Heart right ventricle (tissue), 16 donors: ENCODE measurements at regions of chr19 and their contacts with region 1.

Region 1: DNA sequence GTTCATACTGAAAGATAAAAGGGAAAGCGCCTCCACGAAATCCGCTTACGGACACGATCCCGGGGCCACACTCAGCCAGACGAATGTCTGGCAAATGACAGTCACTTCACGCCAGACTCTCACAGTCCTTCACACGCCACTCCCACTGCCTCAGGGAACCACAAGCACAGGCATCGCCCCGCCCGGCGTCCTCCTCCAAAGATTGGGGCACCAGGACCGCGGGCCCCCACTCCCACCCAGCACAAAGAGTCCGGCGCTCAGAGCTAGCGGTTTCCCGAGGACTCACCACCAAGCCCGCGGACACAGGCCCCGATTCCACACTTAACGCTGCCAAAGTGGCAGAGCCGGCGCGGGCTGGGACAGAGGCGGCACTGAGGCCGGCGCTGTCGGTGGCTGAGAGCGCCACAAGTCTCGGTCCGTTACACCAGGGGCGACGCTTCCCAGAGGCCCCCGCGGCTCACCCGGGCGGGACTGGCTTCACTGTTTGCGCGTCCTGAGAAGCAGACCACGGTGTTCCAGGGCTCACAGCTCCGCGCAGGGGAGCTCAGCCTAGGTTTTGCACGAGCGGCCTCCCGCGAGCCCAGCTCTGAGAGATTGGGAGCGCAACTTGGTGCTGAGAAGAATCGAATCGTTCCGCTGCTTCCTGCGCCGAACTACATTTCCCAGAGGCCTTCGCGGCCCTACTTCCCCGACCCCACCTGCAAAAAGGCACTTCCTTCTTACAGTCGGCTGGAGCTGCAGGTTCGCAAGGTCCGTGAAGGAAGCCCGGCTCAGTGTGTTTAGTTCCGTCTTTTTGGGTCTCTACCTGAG is at the start of gene ZNF569:
- DNase-seq: peak; percentile 85 to 93
- ATAC-seq: peak; percentile 84 to 90 (median 86)
- H3K4me3 ChIP-seq: peak within 1 kb of the TSS; percentile 71 to 85 (median 79)
- H3K27ac ChIP-seq: peak within 1 kb of the TSS; percentile 85 to 99 (median 94)
- H3K4me1 ChIP-seq: peaks cover 2 to 34% (median 27%) of the 10 kb centered on the region in 9 donors
- H3K27me3 ChIP-seq: no peaks in the 10 kb centered on the region
- CTCF ChIP-seq: no peak
- total RNA-seq, gene ZNF569: 4.5 to 8.0 (median 6.2) TPM

Region 2: DNA sequence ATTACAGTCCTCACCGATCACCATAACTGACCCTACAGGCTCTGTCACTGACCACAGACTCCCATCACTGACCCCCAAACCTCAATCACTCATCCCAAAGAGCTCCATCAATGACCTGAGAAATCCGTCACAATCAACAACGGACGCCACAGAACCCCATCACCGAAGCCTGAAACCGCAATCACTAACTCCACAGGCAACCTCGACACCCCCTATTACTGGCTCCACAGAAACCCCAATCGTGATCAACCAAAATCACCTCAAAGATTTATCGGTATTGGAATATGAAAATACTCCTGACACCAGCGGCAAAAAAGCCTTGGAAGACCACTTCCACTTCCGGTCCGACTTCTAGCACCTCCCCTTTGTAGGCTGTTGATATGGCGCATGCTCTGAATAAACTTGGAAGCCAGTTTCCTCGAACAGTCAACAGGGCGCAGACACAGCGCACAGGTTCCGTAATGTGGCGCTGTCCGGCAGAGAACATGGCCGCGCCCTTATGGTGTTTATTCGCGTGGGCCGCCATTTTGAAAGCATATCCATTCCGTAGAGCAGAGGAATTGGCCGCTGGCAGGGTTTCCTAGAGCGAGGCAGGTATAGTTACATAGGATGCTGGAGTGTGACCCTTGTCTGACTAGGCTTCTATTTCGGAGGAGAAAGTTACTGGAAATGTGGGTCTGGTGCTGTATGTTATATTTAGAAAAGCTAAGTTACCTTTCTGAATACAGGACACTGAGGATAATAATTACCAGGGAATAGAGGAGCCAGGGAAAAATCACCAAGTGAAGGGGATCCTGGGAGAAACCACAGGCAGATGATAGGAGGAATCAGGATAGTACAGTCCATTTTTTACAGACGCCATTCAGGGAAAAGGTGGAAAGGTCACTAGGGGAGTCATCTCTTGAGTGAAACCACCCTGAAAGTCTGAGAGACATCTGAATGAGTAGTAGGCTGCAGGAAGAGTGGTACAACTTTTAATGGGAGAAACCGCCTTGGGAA is 294.3 kb before region 1 on chr19 and contains the start of gene ZNF585A:
- intact Hi-C with region 1: loop called in 1 of 10 experiments (anchors 5 kb)
- DNase-seq: peak; percentile 86 to 95
- ATAC-seq: peak; percentile 100
- H3K4me3 ChIP-seq: peak within 1 kb of the TSS; percentile 45 to 78 (median 62)
- H3K27ac ChIP-seq: peak within 1 kb of the TSS in 9 of 10 donors; percentile 47 to 82 (median 66)
- H3K4me1 ChIP-seq: peaks cover 0 to 11% (median 6%) of the 10 kb centered on the region in 9 donors
- H3K27me3 ChIP-seq: no peaks in the 10 kb centered on the region
- CTCF ChIP-seq: peak in 6 of 9 donors; percentile 26 to 57 (median 39)
- total RNA-seq, gene ZNF585A: 7.1 to 17.0 (median 13.0) TPM

Region 3: DNA sequence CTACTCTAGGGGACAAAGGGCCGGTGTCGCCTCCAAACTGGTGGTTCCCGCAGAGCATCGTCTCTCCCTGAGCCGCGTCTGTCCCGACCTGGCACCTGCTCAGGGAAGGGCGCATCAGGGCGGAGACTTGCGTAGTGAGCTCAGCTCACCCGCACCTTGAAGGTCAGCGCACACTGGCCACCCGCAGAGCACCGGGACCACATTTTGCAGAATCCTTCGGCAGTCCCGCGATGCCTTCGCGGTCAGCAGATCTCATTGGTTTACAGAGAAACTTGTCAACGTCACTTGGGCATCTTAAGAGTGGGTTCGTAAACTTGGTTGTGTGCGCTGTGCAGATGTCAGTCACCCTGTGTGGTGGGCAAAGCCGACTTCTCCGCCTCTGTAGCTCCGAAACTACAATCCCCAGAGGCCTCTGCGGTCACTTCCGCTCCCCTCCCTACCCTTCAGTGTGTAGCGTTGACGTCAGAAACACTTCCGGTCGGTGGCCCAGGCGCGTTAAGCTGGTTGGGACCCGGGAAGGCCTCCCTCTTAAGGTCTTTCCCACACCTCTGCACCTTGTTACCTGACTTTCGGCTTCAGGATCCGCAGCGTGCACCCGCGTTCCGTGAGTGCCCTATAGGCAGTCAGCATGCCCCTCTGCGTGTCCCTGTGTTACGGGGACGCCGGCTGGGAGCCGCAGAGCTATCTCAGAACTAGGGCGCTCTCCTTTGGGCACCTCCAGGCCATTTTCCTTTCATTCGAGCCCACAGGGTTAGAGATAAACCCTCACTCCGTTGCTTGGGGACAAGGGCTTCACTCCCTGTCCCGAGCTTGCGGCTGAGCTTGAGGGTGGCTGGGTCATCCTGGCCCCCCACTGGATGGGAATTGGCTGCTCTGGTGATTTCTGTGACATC is 132.6 kb before region 1 on chr19:
- intact Hi-C with region 1: loop called in 3 of 10 experiments (anchors 1 to 10 kb)
- DNase-seq: peak; percentile 90 to 95
- ATAC-seq: peak; percentile 97 to 99 (median 99)
- H3K4me3 ChIP-seq: peak overlapping the region; percentile 58 to 98 (median 78)
- H3K27ac ChIP-seq: peak overlapping the region; percentile 5 to 94 (median 88)
- H3K4me1 ChIP-seq: peaks cover 2 to 51% (median 27%) of the 10 kb centered on the region in 9 donors
- H3K27me3 ChIP-seq: no peaks in the 10 kb centered on the region
- CTCF ChIP-seq: no peak

Region 4: DNA sequence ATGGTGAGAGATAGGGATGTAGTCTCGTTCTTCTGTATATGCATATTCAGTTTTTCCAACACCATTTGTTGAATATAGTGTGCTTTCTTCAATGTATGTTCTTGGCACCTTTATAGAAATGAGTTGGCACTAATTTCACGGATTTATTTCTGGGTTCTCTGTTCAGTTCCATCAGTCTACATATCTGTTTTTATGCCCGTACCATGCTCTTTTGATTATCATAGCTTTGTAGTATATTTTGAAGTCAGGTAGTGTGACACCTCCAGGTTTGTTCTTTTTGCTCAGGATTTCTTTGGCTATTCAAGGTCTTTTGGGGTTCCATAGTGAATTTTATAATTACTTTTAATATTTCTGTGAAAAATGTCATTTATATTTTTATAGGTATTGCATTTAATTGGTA is 25.2 kb after region 1 on chr19:
- intact Hi-C with region 1: no loop called
- DNase-seq: no peak
- ATAC-seq: no peak
- H3K4me3 ChIP-seq: no peak overlapping the region
- H3K27ac ChIP-seq: no peak overlapping the region
- H3K4me1 ChIP-seq: no peaks in the 10 kb centered on the region
- H3K27me3 ChIP-seq: no peaks in the 10 kb centered on the region
- CTCF ChIP-seq: no peak

Region 5: DNA sequence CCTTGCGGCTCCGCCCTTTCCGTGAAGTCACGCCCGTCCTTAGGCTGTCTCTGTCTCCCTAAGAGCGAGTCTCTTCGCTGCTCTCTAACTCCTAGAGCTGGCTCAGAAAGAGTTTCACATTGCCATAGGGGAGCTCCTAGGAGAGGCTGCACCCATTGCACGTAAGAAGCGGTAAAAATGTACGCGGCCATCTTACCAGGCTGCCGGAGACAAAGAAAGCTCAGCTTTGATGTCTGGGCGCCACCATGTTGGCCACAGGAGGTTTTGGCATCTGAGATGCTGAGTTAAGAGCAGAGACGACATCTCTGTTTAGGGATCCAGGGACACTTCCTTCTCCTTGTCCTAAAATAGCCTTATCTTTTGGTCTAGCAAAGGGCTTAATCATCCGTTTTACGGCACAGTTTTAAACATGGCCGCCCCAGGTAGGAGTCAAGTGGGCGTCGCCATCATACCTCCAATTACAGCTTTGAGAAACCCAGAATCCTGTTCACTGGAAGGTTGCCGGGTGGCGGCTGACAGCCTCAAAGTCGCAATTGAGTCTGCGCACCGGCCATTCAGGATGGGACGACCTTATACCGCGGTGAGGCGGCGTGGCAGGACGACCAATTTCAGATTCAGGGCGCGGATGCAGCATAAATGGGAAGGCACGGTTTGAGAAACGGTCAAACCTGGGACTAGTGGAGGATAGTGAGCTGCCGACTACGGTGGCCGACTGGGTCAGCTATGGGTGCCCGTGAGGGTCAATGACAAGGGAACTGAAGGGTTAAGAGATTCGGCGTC is 39.6 kb after region 1 on chr19 and contains the start of gene ZNF793:
- intact Hi-C with region 1: loop called in 7 of 10 experiments (anchors 1 to 5 kb)
- DNase-seq: peak; percentile 84 to 88
- ATAC-seq: peak; percentile 91 to 96 (median 94)
- H3K4me3 ChIP-seq: peak within 1 kb of the TSS; percentile 61 to 97 (median 73)
- H3K27ac ChIP-seq: peak within 1 kb of the TSS; percentile 90 to 98 (median 94)
- H3K4me1 ChIP-seq: peaks cover 0 to 22% (median 14%) of the 10 kb centered on the region in 9 donors
- H3K27me3 ChIP-seq: no peaks in the 10 kb centered on the region
- CTCF ChIP-seq: no peak
- total RNA-seq, gene ZNF793: 4.7 to 9.6 (median 6.9) TPM